Esophagus squamous epithelium (tissue), 5 donors: ENCODE measurements at regions of chr21 and their contacts with region 1.

Region 1: GRCh38 chr21:17682924-17683323 is 70.2 kb upstream of the BTG3 start:
- DNase-seq: no peak
- H3K4me3 ChIP-seq: no peak overlapping the region
- H3K27ac ChIP-seq: no peak overlapping the region
- H3K4me1 ChIP-seq: no peaks in the 10 kb centered on the region
- H3K27me3 ChIP-seq: no peaks in the 10 kb centered on the region
- CTCF ChIP-seq: no peak
- POLR2A ChIP-seq: no peak

Region 2: DNA sequence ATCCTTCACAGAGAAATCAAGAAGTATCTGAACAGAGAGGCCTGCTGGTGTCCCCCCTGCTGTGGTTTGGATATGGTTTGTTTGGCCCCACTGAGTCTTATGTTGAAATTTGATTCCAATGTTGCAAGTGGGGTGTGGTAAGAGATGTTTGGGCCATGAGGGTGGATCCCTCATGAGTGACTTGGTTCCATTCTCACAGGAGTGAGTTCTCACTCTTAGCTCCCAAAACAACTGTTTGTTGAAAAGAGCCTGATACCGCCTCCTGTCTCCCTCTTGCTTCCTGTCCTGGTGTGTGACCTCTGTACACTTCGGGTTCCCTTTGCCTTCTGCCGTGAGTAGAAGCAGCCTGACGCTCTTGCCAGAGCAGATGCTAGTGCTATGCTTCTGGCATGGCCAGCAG is 75.7 kb after region 1 on chr21:
- intact Hi-C with region 1: no loop called
- DNase-seq: no peak
- H3K4me3 ChIP-seq: no peak overlapping the region
- H3K27ac ChIP-seq: no peak overlapping the region
- H3K4me1 ChIP-seq: peaks cover 0 to 5% (median 0%) of the 10 kb centered on the region in 3 donors
- H3K27me3 ChIP-seq: no peaks in the 10 kb centered on the region
- CTCF ChIP-seq: no peak
- POLR2A ChIP-seq: no peak

Region 3: DNA sequence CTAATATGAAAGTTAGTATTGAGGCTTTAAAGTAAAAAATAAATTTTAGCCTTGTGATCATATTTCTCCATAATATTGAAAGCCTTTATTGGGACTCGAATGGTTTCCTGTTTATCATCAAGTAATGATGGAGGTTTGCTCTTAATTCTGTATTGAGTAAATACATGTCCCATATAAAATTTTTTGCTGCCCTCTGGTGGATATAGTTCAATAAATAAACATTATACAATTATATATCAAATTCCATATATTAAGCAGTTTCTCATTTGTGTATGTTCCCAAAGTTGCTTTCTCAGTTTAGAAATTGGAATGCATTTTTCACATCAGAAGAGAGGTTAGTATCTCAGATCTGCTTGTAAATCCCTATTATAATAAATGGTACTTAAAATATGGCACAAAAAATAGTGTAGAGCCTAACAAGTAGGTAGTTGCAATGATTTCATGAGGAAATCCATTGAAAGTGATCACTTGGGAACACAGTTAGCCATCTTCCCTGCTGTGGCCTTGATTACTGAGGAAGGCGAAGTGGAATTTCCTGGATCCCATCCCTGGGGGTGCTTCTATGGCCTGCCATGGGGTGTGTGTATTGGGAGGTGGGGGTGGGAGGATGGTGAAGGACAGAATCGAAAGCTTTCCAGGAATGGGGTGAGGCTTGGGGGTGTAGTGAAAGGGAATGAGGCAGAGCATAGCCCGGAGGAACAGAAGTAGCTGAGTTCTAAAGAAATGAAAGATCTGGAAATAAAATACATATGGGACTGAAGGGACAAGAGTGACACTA is 220.3 kb after region 1 on chr21:
- intact Hi-C with region 1: loop called (anchors 5 kb)
- DNase-seq: no peak
- H3K4me3 ChIP-seq: no peak overlapping the region
- H3K27ac ChIP-seq: peak overlapping the region in 3 of 4 donors; percentile 27 to 53 (median 40)
- H3K4me1 ChIP-seq: peaks cover 0 to 30% (median 3%) of the 10 kb centered on the region in 3 donors
- H3K27me3 ChIP-seq: no peaks in the 10 kb centered on the region
- CTCF ChIP-seq: peak in 4 of 6 experiments; percentile 20 to 66 (median 32)
- POLR2A ChIP-seq: no peak